Calu3 (cell line): ENCODE measurements at regions of chr5 and their contacts with region 1.

Region 1: DNA sequence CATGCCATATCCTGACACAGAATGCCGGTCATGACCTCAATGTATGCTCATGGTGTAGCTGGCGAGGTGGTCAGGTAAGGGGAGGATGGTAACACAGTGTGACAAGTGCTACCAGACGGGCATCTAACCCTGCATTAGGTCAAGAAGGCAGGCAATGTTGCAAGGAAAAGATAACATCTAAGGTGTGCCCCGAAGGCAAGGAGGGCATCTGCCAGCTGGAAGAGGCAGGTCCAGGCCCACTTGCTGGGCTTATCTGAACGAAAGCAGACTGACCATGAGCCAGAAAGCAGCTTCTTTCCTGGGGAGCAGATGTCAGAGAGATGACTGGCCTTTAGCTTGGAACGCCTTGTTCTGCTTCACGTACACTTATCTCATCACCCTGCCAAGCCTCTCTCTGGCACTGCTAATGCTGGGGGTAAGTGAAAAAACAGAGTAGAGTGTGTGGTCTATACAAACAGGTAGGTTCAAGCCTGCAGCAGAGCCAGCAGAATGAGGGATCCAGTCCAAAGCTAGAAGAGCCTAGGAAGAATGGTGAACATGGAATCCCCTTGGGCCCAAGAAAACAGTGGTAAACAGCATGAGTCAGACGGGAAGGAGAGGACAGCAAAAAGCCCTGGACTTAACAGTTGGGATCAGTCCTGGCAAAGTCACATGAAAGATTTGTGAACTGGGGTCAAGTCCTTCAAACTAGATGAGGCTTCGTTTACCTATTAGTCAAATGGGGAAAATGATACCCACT is 201.1 kb downstream of the SLIT3 start:
- DNase-seq: no peak
- H3K4me3 Mint-ChIP-seq: no peak overlapping the region
- H3K27ac Mint-ChIP-seq: no peak overlapping the region
- H3K4me1 Mint-ChIP-seq: no peaks in the 10 kb centered on the region
- H3K27me3 Mint-ChIP-seq: peaks cover 42% of the 10 kb centered on the region
- CTCF ChIP-seq: no peak

Region 2: DNA sequence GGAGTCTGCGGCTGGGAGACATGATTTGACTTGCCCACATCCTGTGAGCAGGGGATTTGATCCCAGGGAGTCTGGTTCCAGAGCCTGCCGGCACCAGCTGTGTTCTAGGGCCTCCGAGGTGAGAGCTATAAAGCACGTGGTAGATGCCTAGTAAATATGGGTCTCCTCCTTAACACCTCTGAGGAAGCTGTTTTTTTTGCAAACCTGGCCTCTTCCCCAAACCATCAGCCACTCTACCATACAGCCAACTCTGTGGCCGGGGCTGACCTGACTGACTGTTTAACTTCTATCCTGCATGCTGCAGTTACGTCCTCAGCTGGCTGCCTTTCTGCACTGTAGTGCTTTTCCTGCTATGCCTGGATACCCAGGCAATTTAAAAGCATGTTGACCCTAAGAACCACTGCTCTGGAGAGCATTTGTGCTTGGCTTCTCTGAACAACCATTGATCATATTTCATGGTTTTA is 19.4 kb before region 1 on chr5:
- CTCF ChIA-PET with region 1: no interaction called
- intact Hi-C with region 1: loop called (anchors 1 kb)
- DNase-seq: no peak
- H3K4me3 Mint-ChIP-seq: no peak overlapping the region
- H3K27ac Mint-ChIP-seq: no peak overlapping the region
- H3K4me1 Mint-ChIP-seq: no peaks in the 10 kb centered on the region
- H3K27me3 Mint-ChIP-seq: peaks cover 11% of the 10 kb centered on the region
- CTCF ChIP-seq: no peak